ENCODE measurements at regions of chr6 and their contacts with region 1.

Region 1: DNA sequence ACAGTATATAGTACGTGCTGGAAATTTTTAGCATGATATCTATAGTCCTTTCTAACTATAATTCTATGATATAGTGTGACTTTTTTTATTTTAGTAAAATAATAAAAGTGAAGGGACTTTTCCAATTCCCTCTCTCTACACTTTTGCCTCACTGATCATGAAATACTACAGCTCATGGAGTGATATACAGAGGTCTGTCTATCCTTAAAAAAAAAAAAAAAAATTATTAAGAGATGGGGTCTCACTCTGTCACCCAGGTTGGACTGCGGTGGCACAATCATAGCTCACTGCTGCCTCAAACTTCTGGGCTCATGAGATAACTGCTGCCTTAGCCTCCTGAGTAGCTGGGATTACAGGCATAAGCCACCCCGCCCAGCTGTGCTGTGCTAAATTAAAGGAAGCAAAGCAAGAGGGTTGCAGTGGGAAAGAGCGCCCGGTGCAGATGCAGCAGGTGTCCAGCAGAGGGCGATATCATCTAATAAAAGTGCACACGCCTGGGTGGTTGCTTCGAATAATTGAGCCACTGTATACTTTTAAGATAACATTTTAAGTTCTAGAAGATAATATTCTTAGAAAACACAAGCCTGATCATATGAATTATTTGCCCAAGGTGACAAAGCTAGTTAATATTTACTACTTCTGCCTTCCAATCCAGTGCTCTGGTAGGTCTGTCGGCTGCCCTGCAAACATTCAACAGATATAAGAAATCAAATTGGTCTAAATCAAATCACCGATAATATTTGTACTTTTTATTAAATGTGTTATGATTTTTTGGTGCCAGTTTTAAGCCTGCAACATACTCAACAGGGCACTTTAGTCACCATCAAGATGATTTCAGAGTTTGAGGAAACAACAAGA is 94.9 kb upstream of the NT5E start:
- DNase-seq: peak; percentile 49 to 71
- H3K4me3 ChIP-seq: no peak overlapping the region
- H3K27ac ChIP-seq: no peak overlapping the region
- H3K4me1 ChIP-seq: peaks cover 24% of the 10 kb centered on the region
- H3K27me3 ChIP-seq: no peaks in the 10 kb centered on the region
- CTCF ChIP-seq: peak; percentile 90

Region 2: GRCh38 chr6:83872386-83873118 is 1482.4 kb before region 1 on chr6:
- CTCF ChIA-PET with region 1: no interaction called
- POLR2A ChIA-PET with region 1: interaction called, 14 read pairs
- intact Hi-C with region 1: no loop called
- DNase-seq: no peak
- H3K4me3 ChIP-seq: no peak overlapping the region
- H3K27ac ChIP-seq: no peak overlapping the region
- H3K4me1 ChIP-seq: peaks cover 11% of the 10 kb centered on the region
- H3K27me3 ChIP-seq: no peaks in the 10 kb centered on the region
- CTCF ChIP-seq: no peak

Region 3: GRCh38 chr6:85482905-85483700 is 128.1 kb after region 1 on chr6:
- CTCF ChIA-PET with region 1: interaction called, 13 read pairs
- POLR2A ChIA-PET with region 1: no interaction called
- intact Hi-C with region 1: loop called (anchors 1 kb)
- DNase-seq: peak; percentile 37 to 71
- H3K4me3 ChIP-seq: no peak overlapping the region
- H3K27ac ChIP-seq: peak overlapping the region; percentile 3; the same call in 1 of the 2 replicates
- H3K4me1 ChIP-seq: no peaks in the 10 kb centered on the region
- H3K27me3 ChIP-seq: no peaks in the 10 kb centered on the region
- CTCF ChIP-seq: peak; percentile 98

Region 4: DNA sequence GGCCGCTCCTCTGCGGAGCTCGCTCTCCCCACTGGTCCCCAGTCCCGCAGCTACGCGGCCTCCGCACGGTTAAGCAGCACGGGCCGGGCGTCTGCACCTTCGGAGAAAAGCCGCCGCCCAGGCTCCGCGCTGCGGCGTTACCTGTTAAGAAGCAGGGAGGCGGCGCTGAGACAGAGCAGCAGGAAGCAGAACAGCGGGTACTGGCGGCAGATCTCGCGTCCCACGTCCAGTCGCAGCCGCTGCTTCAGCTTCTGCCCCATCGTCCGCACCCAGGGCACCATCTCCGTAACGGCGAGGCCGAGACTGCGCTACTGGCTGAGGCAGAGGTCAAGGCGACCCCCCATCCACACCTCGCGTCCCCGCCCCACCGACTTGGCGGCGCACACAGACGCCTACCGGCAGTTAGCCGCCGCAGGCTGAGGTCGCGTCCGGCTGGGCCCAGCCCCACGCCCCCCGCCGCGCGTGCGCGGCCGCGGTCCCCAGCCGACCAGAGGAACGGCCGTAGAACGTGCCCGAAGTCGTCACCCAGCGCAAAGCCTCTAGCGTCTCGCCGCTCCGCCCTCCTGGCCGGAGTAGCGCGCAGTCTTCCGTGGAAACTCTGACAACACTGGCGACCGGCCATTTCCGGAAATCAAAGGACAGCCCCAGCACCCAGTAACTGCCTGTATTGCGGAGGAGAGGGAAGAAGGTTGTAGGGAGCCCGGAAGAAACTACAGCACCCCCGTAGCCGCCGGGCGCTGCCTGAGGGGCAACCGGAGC is 238.6 kb after region 1 on chr6 and contains the start of gene SNX14:
- CTCF ChIA-PET with region 1: no interaction called
- POLR2A ChIA-PET with region 1: no interaction called
- intact Hi-C with region 1: loop called (anchors 2 kb)
- DNase-seq: peak; percentile 85 to 92
- H3K4me3 ChIP-seq: peak within 1 kb of the TSS; percentile 84
- H3K27ac ChIP-seq: peak within 1 kb of the TSS; percentile 76
- H3K4me1 ChIP-seq: peaks cover 34% of the 10 kb centered on the region
- H3K27me3 ChIP-seq: no peaks in the 10 kb centered on the region
- CTCF ChIP-seq: no peak
- total RNA-seq, gene SNX14: 92.0 and 99.1 TPM in 2 replicates

Region 5: GRCh38 chr6:85678602-85679444 is 323.8 kb after region 1 on chr6:
- CTCF ChIA-PET with region 1: interaction called, 3 read pairs
- POLR2A ChIA-PET with region 1: interaction called, 4 read pairs
- intact Hi-C with region 1: loop called (anchors 2 kb)
- DNase-seq: peak; percentile 86 to 96
- H3K4me3 ChIP-seq: peak overlapping the region; percentile 95
- H3K27ac ChIP-seq: peak overlapping the region; percentile 77
- H3K4me1 ChIP-seq: peaks cover 17% of the 10 kb centered on the region
- H3K27me3 ChIP-seq: no peaks in the 10 kb centered on the region
- CTCF ChIP-seq: no peak

Measured in PC-9 (cell line).